ENCODE measurements at regions of chr4 and their contacts with region 1.

Region 1: GRCh38 chr4:53929955-53930798 is 134.2 kb downstream of the CHIC2 start:
- DNase-seq: peak; percentile 83
- H3K4me3 Mint-ChIP-seq: no peak overlapping the region
- H3K27ac Mint-ChIP-seq: no peak overlapping the region
- H3K4me1 Mint-ChIP-seq: no peaks in the 10 kb centered on the region
- H3K27me3 Mint-ChIP-seq: peaks cover 4% of the 10 kb centered on the region

Region 2: GRCh38 chr4:53908661-53909078 is 21.5 kb before region 1 on chr4:
- intact Hi-C with region 1: loop called (anchors 1 kb)
- DNase-seq: peak; percentile 68
- H3K4me3 Mint-ChIP-seq: no peak overlapping the region
- H3K27ac Mint-ChIP-seq: no peak overlapping the region
- H3K4me1 Mint-ChIP-seq: peaks cover 7% of the 10 kb centered on the region
- H3K27me3 Mint-ChIP-seq: peaks cover 34% of the 10 kb centered on the region

Region 3: DNA sequence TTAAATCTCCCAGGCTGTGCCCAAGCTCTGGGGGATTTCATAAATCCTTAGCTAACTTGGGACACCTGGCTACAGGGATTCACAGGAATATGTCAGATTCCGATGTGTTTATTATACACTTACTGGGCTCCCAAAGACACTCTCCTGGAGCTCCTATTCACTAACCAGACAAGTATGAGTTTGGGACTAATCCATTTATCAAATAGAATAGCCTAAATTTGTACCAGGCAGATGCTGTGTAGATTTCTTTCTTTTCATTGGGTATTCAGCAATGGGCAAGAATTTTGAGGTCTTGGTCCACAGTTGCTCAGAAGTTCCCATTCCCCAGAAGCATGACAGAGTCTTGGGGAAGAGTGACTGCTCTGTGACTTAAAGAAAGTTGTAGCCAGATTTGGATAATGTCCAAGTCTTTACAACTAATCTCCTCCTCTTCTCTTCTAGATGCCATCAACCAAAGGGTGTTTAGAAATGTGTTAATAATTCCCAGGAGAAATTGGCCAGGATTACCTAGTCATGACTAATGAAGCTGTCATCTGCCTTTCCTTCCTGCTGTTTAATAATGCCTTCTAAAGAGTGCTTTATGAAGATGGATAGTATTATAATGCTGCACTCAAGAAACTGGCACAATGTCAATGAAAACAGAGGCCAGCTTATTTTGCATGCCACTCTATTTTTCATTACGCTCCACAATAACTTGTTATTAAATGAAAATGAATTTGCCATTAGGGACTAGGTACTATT is 13.3 kb after region 1 on chr4:
- intact Hi-C with region 1: no loop called
- DNase-seq: no peak
- H3K4me3 Mint-ChIP-seq: no peak overlapping the region
- H3K27ac Mint-ChIP-seq: no peak overlapping the region
- H3K4me1 Mint-ChIP-seq: no peaks in the 10 kb centered on the region
- H3K27me3 Mint-ChIP-seq: peaks cover 4% of the 10 kb centered on the region

Region 4: DNA sequence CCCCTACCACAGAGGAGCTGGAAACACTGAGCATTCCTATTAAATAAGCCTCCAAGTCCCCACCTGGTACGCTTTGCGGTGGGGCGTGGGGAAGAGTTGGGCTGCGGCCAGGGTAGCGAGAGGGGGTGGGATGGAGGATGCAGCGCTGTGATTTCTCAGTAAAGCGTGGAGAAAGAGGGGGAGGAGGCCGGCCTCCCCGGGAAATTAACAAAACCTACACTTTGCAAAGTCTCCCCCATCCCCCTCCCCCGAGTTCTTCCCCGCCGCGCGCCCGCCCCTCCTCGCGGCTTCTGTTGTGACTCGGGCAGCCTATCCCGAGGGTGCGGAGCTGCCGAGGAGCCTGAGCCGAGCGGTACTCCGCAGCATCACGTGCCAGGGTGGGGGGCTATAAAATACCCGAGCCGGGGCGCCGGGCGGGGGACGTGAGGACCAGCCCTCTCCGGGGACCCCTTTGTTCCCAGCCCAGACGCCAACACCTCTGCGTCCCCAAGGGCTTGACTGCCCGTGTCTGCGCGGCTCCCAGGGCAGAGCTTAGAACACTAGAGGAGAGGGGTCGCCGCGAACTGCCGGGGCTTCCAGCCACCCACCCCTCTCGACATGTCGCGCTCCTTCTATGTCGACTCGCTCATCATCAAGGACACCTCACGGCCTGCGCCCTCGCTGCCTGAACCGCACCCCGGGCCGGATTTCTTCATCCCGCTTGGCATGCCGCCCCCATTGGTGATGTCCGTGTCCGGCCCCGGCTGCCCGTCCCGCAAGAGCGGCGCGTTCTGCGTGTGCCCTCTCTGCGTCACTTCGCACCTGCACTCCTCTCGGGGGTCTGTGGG is 169.8 kb after region 1 on chr4 and contains the start of gene GSX2:
- intact Hi-C with region 1: loop called (anchors 5 kb)
- DNase-seq: peak; percentile 59
- H3K4me3 Mint-ChIP-seq: peak within 1 kb of the TSS; percentile 59
- H3K27ac Mint-ChIP-seq: no peak within 1 kb of the TSS
- H3K4me1 Mint-ChIP-seq: peaks cover 31% of the 10 kb centered on the region
- H3K27me3 Mint-ChIP-seq: peaks cover 90% of the 10 kb centered on the region
- total RNA-seq, gene GSX2: not detected in 2 replicates

Region 5: DNA sequence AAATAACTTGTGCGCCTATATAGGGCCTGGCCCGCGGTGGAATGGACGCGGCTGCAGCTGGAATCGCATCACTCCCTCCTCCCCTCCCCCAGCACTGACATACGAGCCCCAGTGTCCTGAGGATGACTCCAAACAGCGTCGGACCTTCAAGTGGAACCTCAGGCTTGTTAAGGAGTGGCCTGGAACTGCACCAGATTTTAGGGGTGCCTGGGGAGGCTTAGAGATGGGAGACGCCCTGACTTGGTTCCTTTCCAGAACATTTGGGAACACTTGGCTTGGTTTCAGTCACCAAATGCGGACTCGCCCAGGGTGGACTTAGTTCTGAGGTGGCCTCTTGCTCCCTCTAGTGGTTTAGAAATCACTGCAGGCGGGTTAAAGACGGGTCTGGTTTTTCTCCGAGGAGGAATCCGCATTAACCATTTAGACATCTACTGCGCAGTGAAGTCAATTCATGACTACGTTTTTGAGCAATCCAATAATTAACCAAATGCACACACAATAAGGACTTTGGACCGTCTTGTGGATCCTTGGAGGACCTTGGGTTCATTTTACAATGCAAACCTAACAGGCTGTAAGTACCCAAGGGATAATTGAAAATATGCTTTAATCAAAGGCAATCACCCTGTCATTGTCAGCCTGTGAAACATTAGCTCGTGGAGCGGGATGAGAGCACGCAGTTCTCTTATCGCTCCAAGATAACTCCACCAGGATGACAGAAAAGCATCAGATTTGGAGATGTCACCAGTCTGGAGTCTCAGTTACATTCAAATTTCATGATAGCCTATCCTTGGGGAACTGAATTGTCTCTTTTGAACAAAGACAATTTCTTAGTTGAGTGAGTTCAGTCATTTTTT is 287.7 kb after region 1 on chr4:
- intact Hi-C with region 1: loop called (anchors 1 kb)
- DNase-seq: peak; percentile 87
- H3K4me3 Mint-ChIP-seq: peak overlapping the region; percentile 49
- H3K27ac Mint-ChIP-seq: no peak overlapping the region
- H3K4me1 Mint-ChIP-seq: peaks cover 4% of the 10 kb centered on the region
- H3K27me3 Mint-ChIP-seq: peaks cover 26% of the 10 kb centered on the region

Measured in activated CD4-positive, alpha-beta T cell treated with anti-CD3 and anti-CD28 coated beads, Interleukin-2, amount 10 ng/mL, durations not matched to agents 24 days and 14 days (primary cell).